Vagina (tissue), 2 donors: ENCODE measurements at regions of chr6 and their contacts with region 1.

Region 1: DNA sequence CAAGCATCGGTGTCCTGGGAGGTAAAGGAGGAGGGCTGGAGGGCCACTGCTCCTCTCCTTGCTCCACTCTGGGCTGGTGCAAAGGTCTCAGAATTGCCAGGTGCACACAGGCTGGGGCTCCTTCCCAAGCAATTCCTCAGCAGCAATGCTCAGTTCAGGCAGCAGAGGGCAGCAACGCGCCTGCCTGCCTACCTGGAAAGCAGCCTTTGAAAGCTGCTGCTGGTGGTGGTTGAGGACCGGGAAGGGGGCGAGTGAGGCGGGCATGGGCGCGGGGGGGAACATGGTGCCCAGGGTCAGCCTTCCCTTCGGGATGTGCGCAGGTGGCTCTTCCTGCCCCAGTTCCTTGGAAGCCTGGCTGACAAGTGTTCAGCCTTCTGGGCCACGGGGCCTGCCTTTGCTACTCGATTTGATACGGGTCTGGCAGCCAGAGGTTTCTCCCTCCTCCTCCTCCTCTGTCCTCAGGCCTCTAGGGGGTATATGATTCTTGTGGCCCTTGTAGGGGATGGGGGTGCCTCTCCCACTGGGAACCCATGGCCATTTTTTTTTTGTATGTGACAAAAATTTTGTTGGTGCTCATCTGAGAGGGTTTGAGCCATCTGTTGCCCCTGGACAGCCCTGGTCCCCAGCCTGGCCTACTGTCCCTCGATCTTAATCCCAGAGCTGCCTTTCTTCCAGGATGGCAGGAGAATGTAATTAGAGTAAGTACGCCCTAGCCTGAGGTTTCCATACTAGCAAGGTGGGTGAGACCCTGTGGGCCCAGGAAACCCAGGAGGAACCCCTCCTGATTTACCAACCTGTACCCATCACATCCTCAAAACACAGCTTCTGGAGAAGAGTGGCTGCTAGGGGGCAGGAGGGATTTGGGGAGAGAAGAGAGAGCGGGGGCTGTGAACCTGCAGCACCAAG is 20.1 kb downstream of the MRPS18A start:
- DNase-seq: no peak
- H3K4me3 ChIP-seq: peak overlapping the region in 1 of 2 donors; percentile 23
- H3K27ac ChIP-seq: peak overlapping the region; percentile 75
- H3K4me1 ChIP-seq: peaks cover 37% of the 10 kb centered on the region
- H3K27me3 ChIP-seq: no peaks in the 10 kb centered on the region
- CTCF ChIP-seq: peak; percentile 93 to 98 (median 97)
- POLR2A ChIP-seq: no peak

Region 2: DNA sequence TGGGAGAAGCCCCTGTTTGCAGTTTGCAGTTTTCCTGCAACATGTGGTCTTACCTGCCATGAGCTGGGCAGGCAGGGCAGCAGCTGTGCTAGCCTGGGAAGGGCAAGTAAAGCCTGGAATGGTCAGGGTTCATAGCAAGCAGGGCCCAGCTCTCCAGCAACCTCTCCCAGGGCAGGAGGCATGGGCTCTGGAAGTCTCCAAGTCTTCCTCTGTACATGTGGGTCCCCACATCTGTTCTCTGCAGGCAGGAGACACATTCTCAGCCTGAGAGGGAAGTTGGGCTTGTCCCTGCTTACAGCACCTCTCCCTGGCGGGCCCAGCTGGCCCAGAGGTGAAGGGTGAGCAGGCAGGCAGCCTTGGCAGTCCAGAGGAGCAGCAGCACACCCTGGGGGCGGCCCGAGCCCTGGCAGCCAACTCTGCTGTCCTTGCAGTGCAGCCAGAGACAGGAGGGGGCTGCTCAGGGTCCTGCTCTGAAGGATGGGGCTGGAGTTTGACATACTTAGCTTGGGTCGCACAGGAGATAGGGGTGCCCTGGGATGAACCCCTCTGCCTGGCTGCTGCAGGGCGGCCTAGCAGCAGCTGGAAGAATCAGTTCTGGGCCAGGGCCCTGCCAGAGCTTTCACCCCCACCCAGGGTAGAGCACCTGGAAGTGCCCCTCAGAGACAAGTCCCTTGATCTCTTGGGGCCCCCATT is 283.7 kb after region 1 on chr6:
- intact Hi-C with region 1: loop called (anchors 10 kb)
- DNase-seq: peak; percentile 79 to 95
- H3K4me3 ChIP-seq: no peak overlapping the region
- H3K27ac ChIP-seq: peak overlapping the region; percentile 20
- H3K4me1 ChIP-seq: no peaks in the 10 kb centered on the region
- H3K27me3 ChIP-seq: no peaks in the 10 kb centered on the region
- CTCF ChIP-seq: peak in 1 of 3 experiments; percentile 38
- POLR2A ChIP-seq: no peak

Region 3: GRCh38 chr6:44074439-44075136 is 407.1 kb after region 1 on chr6:
- intact Hi-C with region 1: loop called (anchors 2 kb)
- DNase-seq: no peak
- H3K4me3 ChIP-seq: no peak overlapping the region
- H3K27ac ChIP-seq: peak overlapping the region; percentile 84
- H3K4me1 ChIP-seq: peaks cover 62% of the 10 kb centered on the region
- H3K27me3 ChIP-seq: no peaks in the 10 kb centered on the region
- CTCF ChIP-seq: peak; percentile 72 to 90 (median 85)
- POLR2A ChIP-seq: no peak